ENCODE measurements at regions of chr1 and their contacts with region 1.

Region 1: GRCh38 chr1:15323351-15323988 is 76.4 kb downstream of the FHAD1 start:
- DNase-seq: peak; percentile 58
- H3K27ac ChIP-seq: no peak overlapping the region
- CTCF ChIP-seq: peak; percentile 94

Region 2: GRCh38 chr1:15430787-15431570 is 107.5 kb after region 1 on chr1:
- CTCF ChIA-PET with region 1: interaction called, 57 read pairs
- POLR2A ChIA-PET with region 1: no interaction called
- DNase-seq: no peak
- H3K27ac ChIP-seq: peak overlapping the region; percentile 50
- CTCF ChIP-seq: peak; percentile 91

Region 3: DNA sequence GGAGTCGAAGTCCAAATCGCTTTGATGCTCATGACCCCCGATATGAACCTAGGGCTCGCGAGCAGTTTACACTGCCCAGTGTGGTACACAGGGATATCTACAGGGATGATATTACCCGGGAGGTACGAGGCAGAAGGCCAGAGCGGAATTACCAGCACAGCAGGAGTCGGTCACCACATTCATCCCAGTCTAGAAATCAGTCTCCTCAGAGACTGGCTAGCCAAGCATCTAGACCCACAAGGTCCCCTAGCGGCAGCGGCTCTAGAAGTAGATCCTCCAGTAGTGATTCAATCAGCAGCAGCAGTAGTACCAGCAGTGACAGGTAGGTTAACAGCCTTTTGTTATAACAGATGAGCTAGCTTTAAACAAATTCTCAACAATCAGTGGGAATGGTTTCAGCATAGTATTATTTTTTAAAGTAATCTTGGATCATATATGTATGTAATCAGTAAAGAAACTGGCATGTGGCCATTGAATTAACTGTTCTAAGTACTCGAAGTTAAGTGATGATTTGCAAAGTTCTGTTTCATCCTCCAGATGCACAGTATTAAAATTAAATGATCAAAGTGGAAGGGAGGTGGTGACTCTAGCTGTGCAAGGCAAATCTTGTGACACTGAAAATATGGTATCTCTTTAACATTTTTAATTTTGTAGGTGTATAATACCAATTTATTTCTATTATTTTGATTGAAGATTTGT is 553.0 kb after region 1 on chr1:
- CTCF ChIA-PET with region 1: no interaction called
- POLR2A ChIA-PET with region 1: no interaction called
- DNase-seq: no peak
- H3K27ac ChIP-seq: no peak overlapping the region; the same call in 1 of the 2 replicates
- CTCF ChIP-seq: no peak